WTC11 (cell line): ENCODE measurements at regions of chr15 and their contacts with region 1.

Region 1: DNA sequence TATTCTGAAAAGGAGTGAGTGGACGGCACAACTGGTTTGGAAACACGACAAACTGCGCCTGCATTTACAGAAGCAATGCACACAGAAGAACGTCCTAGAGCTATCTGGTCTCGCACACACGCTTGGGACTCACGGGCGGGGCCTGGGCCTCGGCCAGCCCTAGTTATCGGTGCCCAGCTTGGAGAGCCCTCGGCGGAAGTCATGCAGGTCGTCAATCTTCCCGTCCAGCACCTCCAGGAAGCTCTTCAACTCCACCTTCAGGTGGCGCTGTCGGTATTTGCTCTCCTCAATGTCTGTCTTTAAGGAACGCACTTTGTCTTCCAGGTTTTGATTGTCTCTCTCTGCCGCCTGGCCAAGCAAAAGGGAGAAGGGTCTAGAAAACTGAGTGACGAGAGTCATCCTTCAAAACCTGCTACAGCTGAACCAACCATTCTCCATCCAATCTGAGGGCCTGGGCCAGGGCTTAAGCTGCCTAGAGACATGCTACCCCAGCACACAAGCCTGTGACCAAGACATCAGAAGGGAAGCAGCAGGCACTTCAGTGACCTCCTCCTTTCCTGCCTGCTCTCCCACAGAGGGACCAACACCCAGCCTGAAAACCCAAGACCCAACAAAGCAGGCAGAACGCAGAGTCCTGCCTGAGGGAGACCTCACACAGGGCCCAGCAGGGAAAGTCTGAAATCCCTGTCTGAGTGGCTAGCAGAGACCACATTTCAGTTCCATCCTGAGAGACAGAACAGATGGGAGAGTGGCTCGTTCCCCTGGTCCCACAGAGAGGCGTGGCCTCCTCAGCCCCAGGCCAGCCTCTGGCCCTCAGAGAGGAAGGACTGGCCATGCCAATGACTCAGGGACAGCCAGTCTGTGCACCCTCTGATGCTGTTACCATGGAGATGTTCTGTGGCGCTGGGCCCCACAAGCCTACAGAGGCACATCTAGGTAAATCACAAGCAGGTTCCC is 40.4 kb downstream of the WHAMM start:
- DNase-seq: peak; percentile 87
- ATAC-seq: peak; percentile 95
- H3K4me3 Mint-ChIP-seq: no peak overlapping the region; the same call in 1 of the 2 replicates
- H3K27ac Mint-ChIP-seq: peak overlapping the region; percentile 94
- H3K4me1 Mint-ChIP-seq: peaks cover 15% of the 10 kb centered on the region
- H3K27me3 Mint-ChIP-seq: no peaks in the 10 kb centered on the region
- CTCF ChIP-seq: peak; percentile 72

Region 2: DNA sequence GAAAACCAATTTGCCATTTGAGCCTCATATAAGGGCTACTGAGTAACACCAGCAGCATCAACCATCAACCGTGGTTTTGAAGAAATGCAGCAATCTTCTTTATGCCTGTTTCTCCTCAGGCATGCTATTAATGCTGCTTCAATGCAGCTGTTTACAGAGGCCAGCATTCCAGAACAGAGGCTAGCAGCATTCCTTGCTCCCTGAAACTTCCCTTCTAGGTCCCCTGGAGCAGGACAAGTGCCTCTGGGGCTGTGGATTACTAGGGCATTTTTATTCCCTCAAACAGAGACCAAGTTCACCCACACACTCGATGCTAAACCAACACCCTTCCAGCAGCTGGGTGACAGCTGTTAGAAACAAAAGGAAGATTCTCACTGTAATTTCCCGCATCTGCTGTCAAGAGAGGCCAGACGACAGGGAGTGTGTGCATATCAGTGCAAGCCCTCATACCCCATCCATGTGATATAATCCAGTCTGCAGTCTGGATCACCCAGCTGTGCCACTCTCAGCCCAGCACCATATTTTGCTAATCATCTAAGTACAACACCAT is 45.2 kb after region 1 on chr15:
- CTCF ChIA-PET with region 1: interaction called, 11 read pairs
- POLR2A ChIA-PET with region 1: interaction called, 3 read pairs
- DNase-seq: no peak
- ATAC-seq: peak; percentile 82
- H3K4me3 Mint-ChIP-seq: no peak overlapping the region
- H3K27ac Mint-ChIP-seq: peak overlapping the region; percentile 8; the same call in 1 of the 2 replicates
- H3K4me1 Mint-ChIP-seq: peaks cover 10% of the 10 kb centered on the region
- H3K27me3 Mint-ChIP-seq: no peaks in the 10 kb centered on the region
- CTCF ChIP-seq: no peak

Region 3: DNA sequence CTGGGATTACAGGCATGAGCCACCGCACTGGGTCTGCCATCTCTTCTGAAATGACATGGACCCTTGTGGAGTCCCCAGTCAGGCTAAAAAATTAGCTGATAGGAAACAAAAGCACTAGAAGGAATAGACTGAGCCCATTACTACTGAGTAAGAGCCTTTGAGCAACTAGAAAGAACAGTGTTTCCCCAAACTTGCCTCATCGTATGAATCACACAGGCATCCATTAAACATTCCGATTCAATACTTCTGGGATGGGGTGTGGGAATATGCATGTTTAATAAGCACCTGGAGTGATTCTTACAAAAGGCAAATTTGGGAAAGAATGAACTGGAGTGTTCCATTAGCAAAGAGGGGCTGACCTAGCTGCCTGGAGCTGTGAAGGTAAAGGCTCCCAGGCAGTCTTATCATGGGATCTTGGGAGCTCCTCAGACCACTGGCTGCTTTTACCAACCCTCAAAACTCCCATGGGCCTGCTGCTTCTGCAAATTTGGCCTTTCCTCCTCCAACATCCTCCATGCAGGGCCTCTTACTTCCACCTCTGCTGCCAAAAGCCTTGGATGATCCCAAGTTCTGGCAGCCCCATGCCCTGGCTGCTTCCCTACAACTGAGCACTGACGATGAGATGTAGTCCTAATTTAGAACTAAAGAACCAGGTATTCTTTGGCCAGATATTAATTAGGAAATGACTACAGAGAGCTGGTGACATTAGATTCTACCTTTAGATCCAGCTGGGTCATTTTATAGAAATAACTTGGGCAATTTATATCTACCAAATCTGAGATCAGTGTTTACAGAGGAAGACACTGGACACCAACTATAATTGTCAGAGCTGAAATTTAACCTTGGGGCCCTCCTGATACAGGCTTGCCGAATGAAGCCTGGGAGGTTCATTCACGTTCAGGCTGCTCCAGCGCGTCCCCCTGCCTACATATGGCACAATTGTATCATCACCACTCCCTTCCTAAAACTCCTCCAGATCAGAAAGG is 113.8 kb after region 1 on chr15:
- CTCF ChIA-PET with region 1: interaction called, 16 read pairs
- POLR2A ChIA-PET with region 1: no interaction called
- DNase-seq: no peak
- ATAC-seq: peak; percentile 81
- H3K4me3 Mint-ChIP-seq: no peak overlapping the region; the same call in 1 of the 2 replicates
- H3K27ac Mint-ChIP-seq: peak overlapping the region; percentile 63; the same call in 1 of the 2 replicates
- H3K4me1 Mint-ChIP-seq: peaks cover 13% of the 10 kb centered on the region
- H3K27me3 Mint-ChIP-seq: peaks cover 2% of the 10 kb centered on the region; the same call in 1 of the 2 replicates
- CTCF ChIP-seq: no peak

Region 4: GRCh38 chr15:82999905-83000671 is 150.3 kb after region 1 on chr15:
- CTCF ChIA-PET with region 1: interaction called, 10 read pairs
- POLR2A ChIA-PET with region 1: interaction called, 3 read pairs
- DNase-seq: peak; percentile 15
- ATAC-seq: peak; percentile 94
- H3K4me3 Mint-ChIP-seq: no peak overlapping the region
- H3K27ac Mint-ChIP-seq: no peak overlapping the region
- H3K4me1 Mint-ChIP-seq: no peaks in the 10 kb centered on the region
- H3K27me3 Mint-ChIP-seq: peaks cover under 1% of the 10 kb centered on the region; the same call in 1 of the 2 replicates
- CTCF ChIP-seq: no peak; the same call in 1 of the 2 replicates